Activated B cell treated with CpG ODN at 0.5 μM for 24 hours (primary cell): ENCODE measurements at regions of chr2 and their contacts with region 1.

Region 1: DNA sequence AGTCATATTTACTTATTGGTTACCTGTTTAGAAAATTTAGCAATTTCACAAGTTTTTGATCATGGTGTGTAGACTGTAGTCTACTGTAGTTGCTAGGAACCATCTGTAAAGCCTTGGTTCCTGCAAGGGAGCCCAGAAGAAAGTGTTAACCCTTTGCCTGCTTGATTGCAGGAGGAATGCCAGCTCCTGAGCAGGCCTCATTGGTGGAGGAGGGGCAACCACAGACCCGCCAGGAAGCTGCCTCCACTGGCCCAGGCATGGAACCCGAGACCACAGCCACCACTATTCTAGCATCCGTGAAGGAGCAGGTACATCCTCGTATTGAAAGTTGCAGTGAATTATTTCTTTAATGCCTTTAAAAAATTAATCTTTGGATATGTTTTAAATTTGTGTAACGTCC is 76.3 kb downstream of the PKP4 start:
- DNase-seq: no peak
- ATAC-seq: no peak
- H3K4me3 Mint-ChIP-seq: no peak overlapping the region
- H3K27ac Mint-ChIP-seq: no peak overlapping the region
- H3K4me1 Mint-ChIP-seq: no peaks in the 10 kb centered on the region
- H3K27me3 Mint-ChIP-seq: no peaks in the 10 kb centered on the region
- CTCF ChIP-seq: no peak

Region 2: DNA sequence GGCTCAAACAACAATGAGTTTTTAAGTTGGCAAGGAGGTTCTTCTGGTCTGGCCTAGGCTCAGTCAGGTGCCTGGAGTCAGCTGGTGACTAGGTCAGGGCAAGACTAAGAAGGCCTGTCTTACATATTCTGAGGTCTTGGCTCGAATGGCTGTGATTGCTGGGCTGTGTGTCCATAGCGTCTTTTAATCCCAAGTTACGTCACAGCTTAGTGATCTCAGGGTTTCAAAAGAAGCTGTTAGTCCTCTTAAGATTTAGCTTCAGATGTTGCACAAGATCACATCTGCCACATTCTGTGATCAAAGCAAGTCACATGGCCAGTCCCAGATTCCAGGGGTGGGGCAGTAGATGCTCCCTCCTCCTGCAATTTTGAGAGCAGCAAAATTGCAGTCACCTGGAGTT is 14.9 kb before region 1 on chr2:
- CTCF ChIA-PET with region 1: no interaction called
- POLR2A ChIA-PET with region 1: no interaction called
- intact Hi-C with region 1: loop called (anchors 1 kb)
- DNase-seq: no peak
- ATAC-seq: no peak
- H3K4me3 Mint-ChIP-seq: no peak overlapping the region
- H3K27ac Mint-ChIP-seq: no peak overlapping the region
- H3K4me1 Mint-ChIP-seq: peaks cover 7% of the 10 kb centered on the region
- H3K27me3 Mint-ChIP-seq: no peaks in the 10 kb centered on the region
- CTCF ChIP-seq: no peak

Region 3: GRCh38 chr2:158624961-158625360 is 92.0 kb after region 1 on chr2:
- CTCF ChIA-PET with region 1: no interaction called
- POLR2A ChIA-PET with region 1: no interaction called
- intact Hi-C with region 1: no loop called
- DNase-seq: no peak
- ATAC-seq: no peak
- H3K4me3 Mint-ChIP-seq: no peak overlapping the region
- H3K27ac Mint-ChIP-seq: no peak overlapping the region
- H3K4me1 Mint-ChIP-seq: no peaks in the 10 kb centered on the region
- H3K27me3 Mint-ChIP-seq: no peaks in the 10 kb centered on the region
- CTCF ChIP-seq: no peak